Psoas muscle (tissue), 8 donors: ENCODE measurements at regions of chr3 and their contacts with region 1.

Region 1: GRCh38 chr3:133927540-133928066 is 31.9 kb upstream of the RAB6B start:
- DNase-seq: peak; percentile 73 to 76
- ATAC-seq: peak; percentile 75 to 94 (median 82)
- H3K4me3 ChIP-seq: peak overlapping the region; percentile 69
- H3K27ac ChIP-seq: no peak overlapping the region
- H3K4me1 ChIP-seq: peaks cover 5% of the 10 kb centered on the region
- H3K27me3 ChIP-seq: no peaks in the 10 kb centered on the region
- CTCF ChIP-seq: peak; percentile 89

Region 2: GRCh38 chr3:133661454-133662277 is 265.9 kb before region 1 on chr3 and contains the start of gene TOPBP1:
- intact Hi-C with region 1: loop called (anchors 5 to 10 kb)
- DNase-seq: peak; percentile 80 to 88
- ATAC-seq: peak; percentile 90 to 98 (median 92)
- H3K4me3 ChIP-seq: peak within 1 kb of the TSS; percentile 85
- H3K27ac ChIP-seq: peak within 1 kb of the TSS; percentile 86
- H3K4me1 ChIP-seq: peaks cover 12% of the 10 kb centered on the region
- H3K27me3 ChIP-seq: no peaks in the 10 kb centered on the region
- CTCF ChIP-seq: no peak
- total RNA-seq, gene TOPBP1: 6.7 to 10.5 (median 8.4) TPM

Region 3: GRCh38 chr3:133821767-133822638 is 105.6 kb before region 1 on chr3:
- intact Hi-C with region 1: loop called (anchors 1 to 5 kb)
- DNase-seq: peak; percentile 78 to 79
- ATAC-seq: peak; percentile 5 to 78 (median 68)
- H3K4me3 ChIP-seq: no peak overlapping the region
- H3K27ac ChIP-seq: no peak overlapping the region
- H3K4me1 ChIP-seq: no peaks in the 10 kb centered on the region
- H3K27me3 ChIP-seq: no peaks in the 10 kb centered on the region
- CTCF ChIP-seq: no peak

Region 4: GRCh38 chr3:133943639-133944141 is 16.1 kb after region 1 on chr3:
- intact Hi-C with region 1: no loop called
- DNase-seq: no peak
- ATAC-seq: peak in 3 of 4 donors; percentile 32 to 38 (median 33)
- H3K4me3 ChIP-seq: no peak overlapping the region
- H3K27ac ChIP-seq: no peak overlapping the region
- H3K4me1 ChIP-seq: peaks cover 45% of the 10 kb centered on the region
- H3K27me3 ChIP-seq: no peaks in the 10 kb centered on the region
- CTCF ChIP-seq: no peak

Region 5: GRCh38 chr3:134039161-134039862 is 111.7 kb after region 1 on chr3:
- intact Hi-C with region 1: loop called (anchors 1 to 10 kb)
- DNase-seq: no peak
- ATAC-seq: peak; percentile 71 to 80 (median 75)
- H3K4me3 ChIP-seq: no peak overlapping the region
- H3K27ac ChIP-seq: no peak overlapping the region
- H3K4me1 ChIP-seq: no peaks in the 10 kb centered on the region
- H3K27me3 ChIP-seq: no peaks in the 10 kb centered on the region
- CTCF ChIP-seq: peak; percentile 38

Region 6: DNA sequence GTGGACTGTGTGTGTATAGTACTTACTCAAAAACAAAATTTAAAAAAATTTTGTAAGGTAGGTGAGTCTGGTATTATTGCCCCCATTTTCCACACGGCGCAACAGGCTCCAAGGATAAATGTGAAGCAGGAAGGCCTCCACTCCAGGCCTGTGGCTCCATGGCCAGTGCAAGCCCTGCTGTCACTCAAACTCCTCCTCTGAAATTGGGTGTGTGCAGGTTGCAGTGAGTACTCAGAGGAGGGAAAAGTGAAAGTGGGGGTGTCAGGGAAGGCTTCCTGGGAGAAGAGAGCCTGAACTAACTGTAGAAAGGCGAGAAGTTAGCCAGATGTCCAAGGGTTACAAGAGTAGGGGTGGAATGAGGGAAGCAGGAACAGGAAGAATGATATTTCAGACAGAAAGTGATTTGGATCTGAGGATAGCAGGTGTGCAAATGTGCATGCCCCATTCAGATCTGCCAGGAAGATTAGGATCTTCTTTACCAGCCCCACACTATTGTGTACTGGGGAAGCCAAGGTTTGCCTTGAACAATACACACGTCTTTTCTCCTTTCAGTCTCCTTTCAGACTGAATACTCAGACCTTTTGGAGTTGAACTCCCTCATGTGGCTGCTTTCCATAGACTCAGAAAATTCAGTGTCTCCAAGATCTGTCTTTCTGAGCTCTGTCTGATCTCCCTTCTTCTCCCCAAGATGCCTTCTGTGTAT is 371.7 kb after region 1 on chr3:
- intact Hi-C with region 1: loop called in 1 of 2 experiments (anchors 5 kb)
- DNase-seq: no peak
- ATAC-seq: peak; percentile 23 to 56 (median 38)
- H3K4me3 ChIP-seq: no peak overlapping the region
- H3K27ac ChIP-seq: no peak overlapping the region
- H3K4me1 ChIP-seq: no peaks in the 10 kb centered on the region
- H3K27me3 ChIP-seq: no peaks in the 10 kb centered on the region
- CTCF ChIP-seq: no peak